Tibial artery (tissue), 4 donors: ENCODE measurements at regions of chr21 and their contacts with region 1.

Region 1: DNA sequence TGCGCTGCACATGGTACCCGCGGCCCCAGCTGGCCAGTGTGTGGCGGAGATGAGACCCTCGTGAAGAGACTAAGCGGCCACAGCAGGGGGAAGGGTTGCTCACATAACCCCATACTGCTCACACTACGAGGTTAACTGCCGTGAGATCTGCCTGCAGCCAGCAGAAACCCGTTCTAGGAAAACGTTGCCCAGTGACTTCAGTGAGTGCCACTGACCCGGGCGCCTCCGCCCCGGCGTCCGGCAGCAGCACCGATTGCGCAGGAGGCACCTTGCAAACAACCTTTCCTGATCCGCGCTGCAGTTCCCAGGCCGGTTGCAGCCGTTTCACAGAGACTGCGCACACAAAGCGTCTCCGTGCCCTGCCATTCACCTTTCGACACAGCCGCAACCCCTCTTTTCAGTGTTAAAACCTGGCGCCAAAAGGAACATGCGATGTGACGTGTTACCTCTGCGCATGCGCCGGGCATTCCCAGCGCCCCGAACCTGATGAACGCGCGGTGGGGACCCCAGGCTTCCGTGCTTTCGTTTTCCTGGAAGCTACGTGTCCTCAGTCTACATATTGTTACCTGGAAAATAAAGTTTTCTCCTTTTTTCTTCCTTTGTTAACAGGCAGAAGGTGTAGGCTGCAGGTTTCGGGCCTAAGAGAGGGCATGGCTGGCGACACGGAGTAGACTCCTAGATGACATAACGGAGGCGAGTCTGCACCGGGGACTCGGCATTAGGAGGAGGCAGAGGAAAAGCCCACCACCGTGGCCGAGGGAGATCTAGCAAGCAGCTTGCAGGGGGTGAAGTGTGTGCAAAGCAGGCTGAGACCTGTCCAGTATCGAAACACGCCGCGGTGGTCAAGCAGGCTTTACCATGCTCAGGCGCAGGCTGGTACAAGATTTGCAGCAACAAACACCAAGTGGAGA is 8.9 kb downstream of the VPS26C start:
- DNase-seq: peak in 1 of 2 donors; percentile 72
- H3K4me3 ChIP-seq: peak overlapping the region; percentile 51 to 69
- H3K27ac ChIP-seq: peak overlapping the region; percentile 65 to 76
- H3K4me1 ChIP-seq: peaks cover 0 to 22% (median 15%) of the 10 kb centered on the region in 4 donors
- H3K27me3 ChIP-seq: no peaks in the 10 kb centered on the region
- CTCF ChIP-seq: no peak

Region 2: DNA sequence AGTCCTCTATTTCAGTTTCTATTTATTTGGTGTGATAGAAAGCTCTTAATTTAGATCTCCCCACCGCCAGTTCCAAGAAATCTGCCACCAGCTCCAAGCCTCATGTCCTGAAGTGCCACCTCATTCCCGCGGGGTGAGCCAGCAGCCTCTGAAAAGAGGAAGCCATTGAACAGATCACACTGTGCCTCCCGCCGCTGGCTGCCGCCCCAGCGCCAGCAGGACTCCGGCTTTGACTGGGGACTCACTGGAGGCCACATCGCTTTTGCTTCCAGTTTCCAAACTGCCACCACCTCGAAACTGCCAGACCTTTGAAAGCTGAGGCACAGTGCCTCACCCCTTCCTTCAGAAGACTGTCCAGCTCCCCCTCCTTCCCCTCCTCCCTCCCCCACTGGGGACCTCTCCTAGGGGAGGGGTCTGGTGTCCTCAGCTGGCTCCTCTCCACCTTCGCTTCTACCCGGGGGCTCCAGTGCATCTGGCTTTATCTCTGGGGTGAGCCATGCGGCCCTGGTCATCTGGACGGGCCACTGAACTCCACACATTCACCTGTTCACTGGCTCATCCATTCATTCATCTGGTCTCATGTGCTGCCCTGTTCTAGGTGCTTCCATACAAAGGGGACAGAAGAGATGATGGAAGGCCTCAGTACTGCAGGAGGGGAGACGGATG is 50.0 kb before region 1 on chr21:
- intact Hi-C with region 1: loop called (anchors 5 kb)
- DNase-seq: peak; percentile 79 to 91
- H3K4me3 ChIP-seq: peak overlapping the region; percentile 32 to 34
- H3K27ac ChIP-seq: peak overlapping the region; percentile 71 to 76
- H3K4me1 ChIP-seq: peaks cover 0 to 28% (median 23%) of the 10 kb centered on the region in 4 donors
- H3K27me3 ChIP-seq: no peaks in the 10 kb centered on the region
- CTCF ChIP-seq: peak in 1 of 2 experiments; percentile 15